GM13977 (cell line): ENCODE measurements at regions of chr1 and their contacts with region 1.

Region 1: DNA sequence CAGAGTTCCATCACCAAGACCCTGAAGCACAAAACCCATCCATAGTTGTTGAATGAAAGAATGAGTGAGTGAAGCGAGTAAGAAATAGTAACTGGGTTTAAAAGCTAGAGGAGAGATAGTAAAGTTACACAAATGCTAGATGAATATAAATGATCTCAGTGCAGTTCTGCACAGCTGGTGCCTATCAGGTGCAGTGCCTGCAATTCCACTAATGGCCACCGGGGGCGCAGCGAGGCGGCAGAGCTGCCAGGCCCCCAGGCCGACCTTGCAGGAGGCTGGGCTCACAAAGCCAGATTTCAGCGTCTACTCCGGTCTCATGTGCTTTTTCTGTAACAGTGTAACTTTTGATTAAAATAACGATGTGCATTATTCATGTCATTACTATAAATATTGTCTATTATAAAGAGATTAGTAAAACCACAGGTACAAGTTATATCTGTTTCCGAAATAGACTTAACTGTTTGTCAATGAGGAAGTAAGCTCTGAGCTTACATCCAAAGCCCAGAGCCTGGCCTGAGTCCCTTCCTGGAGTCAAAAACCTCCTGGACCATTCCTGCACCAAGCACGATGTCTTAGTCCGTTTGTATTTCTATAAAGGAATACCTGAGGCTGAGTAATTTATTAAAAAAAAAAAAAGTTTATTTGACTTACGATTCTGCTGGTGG is 477.6 kb downstream of the NPHP4 start:
- DNase-seq: peak; percentile 85
- CTCF ChIP-seq: peak; percentile 100

Region 2: DNA sequence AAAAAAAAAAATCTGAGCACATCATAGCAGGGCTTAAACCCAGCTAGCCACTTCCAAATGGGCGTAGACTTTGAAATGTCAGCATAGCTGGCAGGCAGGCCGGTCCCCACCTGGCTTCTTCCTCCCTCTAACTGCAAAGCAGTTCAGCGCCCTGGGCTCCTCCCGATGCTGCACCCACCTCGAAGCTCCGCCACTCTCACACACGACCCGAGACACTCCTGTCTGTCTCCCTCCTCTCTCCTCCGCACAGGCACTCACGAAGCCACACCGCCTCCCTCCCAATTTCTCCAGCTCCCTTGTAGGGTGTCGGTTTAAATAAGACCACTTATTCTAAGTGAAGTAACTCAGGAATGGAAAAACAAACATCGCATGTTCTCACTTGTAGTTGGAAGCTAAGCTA is 176.2 kb after region 1 on chr1:
- in situ Hi-C with region 1: no loop called
- DNase-seq: no peak
- CTCF ChIP-seq: no peak

Region 3: DNA sequence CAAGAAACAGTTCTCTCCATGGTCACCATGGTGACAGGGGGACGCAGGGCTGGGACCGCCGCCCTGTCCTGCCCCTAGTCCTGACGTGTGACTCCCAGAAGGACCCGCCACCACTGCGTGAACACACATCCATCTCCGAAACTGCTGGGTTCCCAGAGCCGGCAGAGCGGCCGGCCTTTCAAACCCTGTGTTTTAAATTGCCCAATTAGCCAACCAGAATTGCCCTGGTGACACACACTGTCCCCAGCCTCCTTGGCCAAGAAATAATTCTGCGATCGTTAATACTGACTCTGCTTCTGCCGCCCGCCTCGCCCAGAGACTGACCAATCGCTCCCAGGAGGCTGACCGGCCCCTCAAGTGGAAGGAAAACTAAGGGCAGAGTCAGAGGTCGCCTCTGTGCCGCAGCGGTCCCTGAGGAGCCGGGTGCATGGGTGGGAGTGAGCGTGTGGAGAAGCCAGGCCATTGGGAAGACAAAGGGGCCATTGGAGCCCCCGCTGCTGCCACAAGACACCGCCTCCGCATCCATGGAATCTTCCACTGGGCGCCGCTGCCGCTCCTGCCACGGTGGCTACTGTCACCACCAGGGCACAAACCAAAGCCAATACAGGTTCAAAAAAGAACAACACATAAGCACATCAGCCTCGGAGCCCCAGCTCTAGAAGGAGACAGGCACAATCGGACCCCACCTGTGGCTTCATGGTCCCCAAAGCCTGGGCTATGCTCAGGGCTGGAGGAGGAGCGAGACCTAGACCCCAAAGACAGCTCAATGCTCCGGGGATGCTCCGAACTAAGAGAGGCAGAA is 204.4 kb after region 1 on chr1:
- in situ Hi-C with region 1: no loop called
- DNase-seq: no peak
- CTCF ChIP-seq: no peak

Region 4: GRCh38 chr1:5915587-5916571 is 401.2 kb after region 1 on chr1:
- in situ Hi-C with region 1: loop called (anchors 25 kb)
- DNase-seq: peak; percentile 82
- CTCF ChIP-seq: peak; percentile 81

Region 5: GRCh38 chr1:6141592-6141991 is 626.9 kb after region 1 on chr1:
- in situ Hi-C with region 1: no loop called
- DNase-seq: peak; percentile 74
- CTCF ChIP-seq: peak; percentile 39